ENCODE measurements at regions of chr3 and their contacts with region 1.

Region 1: DNA sequence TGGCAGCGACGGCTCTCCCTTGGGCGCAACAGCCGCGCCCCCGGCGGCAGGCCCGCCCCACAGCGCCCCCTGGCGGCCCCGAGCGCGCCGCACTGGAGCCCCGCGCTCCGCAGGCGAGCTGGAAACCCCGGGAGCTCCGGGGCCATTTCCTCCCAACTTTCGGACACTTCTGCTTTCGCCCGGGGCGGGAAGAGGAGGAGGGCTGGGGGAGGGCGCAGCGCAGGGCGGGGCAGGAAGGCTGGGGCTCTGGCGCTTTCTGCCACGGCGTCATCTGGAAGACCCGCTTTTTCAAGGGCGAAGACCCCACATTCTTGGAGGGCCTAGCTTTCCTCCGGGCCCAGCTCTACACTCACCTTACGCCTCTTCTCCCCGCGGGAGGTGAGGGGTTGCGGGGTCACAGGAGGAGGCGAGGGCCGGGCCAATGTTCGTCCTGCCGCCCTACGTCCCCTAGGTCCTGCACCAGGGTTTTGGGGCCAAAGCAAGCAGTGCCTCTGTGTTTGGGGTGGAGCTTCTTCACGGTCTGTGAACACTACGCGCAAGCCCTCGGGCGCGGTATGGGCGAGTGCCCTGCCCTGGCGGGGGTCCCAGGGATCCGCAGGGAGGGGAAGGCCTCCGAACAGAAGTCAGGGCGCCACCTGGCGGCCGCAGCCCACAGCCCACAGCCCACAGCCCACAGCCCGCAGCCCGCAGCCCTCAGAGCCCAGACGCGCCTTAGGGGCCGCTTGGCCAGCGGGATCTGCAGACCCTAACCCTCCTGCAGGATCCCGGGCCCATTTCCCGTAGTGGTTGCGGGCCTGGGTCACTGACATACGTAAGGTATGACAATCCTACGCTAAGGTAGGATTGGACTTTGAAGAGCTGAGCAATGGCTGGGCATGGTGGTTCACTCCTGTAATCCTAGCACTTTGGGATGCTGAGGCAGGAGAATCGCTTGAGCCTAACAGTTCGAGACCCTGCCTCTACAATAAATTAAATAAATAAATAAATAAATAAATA is 31.1 kb downstream of the FOXL2 start:
- DNase-seq: peak; percentile 91
- H3K27ac ChIP-seq: peak overlapping the region; percentile 87
- CTCF ChIP-seq: peak; percentile 91

Region 2: GRCh38 chr3:138694287-138695007 is 221.4 kb before region 1 on chr3:
- CTCF ChIA-PET with region 1: interaction called, 27 read pairs
- POLR2A ChIA-PET with region 1: no interaction called
- DNase-seq: peak; percentile 50
- H3K27ac ChIP-seq: no peak overlapping the region
- CTCF ChIP-seq: no peak

Measured in RWPE1 (cell line).